Posterior vena cava (tissue), 2 donors: ENCODE measurements at regions of chr3 and their contacts with region 1.

Region 1: DNA sequence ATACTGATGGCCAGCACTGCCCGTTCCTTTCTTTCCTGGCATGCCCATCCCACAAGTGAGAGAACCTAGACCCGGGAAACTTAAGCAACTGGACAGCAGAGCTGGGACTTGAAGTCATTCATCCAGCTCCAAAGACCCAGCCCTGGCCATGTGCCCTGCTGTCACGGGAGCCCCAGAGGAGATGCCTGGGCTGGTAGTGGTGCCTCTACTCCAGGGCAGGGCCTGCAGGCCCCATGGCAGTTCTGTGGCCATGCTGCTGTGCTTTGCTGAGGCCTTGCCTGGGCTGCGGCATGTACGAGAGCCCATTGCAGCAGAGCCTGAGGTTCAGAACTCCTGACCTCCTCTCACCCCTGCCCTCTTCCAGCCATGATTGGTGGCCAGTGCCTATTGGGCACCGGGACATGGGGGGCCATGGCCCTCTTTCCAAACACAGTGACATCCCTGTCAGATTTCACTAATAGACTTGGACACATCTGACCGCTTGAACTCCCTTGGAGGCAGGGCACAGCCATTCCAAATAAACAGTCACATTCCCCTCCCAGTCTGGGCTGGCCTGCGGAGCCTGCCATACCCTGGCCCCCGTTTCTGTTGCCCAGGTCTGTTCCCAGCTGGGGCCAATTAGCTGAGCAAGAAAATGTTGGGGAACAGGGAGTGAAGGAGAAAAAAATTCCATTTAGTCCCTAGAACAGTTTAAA is 115.9 kb downstream of the EEFSEC start:
- DNase-seq: no peak

Region 2: DNA sequence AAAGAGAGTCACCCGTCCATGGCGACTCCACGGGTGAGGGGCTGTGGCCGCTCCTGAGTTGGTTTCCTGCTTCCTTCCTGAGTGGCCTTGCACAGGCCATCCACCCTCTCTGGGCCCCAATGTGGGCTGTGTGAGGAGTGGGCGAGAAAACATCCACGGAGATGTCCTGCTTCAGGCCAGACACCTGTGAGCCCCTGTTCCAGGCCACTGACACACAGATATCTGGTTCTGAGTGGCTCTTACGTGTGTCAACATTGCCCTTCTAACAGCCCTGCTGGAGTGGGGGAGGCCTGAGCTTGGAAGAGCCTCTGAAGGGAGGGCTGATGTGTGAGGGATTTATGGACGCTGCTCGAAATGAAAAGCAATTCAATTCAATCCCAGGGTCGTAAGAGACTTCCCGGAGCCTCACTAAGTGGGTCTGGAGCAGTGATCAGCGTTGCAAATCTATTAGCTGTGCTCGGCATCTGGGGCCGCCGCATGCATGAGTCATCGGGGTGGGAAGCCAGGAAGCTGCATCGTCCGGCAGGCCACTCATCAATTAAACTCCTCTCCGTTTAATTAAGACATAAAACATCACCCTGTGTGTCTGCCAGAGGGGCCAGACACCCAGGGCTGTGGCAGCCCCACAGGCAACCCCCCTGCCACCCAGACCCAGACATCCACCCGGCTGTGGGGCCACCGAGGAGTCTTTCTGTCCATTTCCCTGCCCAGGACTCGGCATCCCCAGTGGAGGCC is 1096.3 kb before region 1 on chr3:
- intact Hi-C with region 1: no loop called
- DNase-seq: no peak

Region 3: GRCh38 chr3:128287216-128287615 is 18.0 kb after region 1 on chr3:
- intact Hi-C with region 1: loop called in 1 of 2 experiments (anchors 2 kb)
- DNase-seq: peak; percentile 14